Activated CD4-positive, alpha-beta T cell treated with anti-CD3 and anti-CD28 coated beads, Interleukin-2, amount 10 ng/mL, durations not matched to agents 24 days and 14 days (primary cell): ENCODE measurements at regions of chr5 and their contacts with region 1.

Region 1: DNA sequence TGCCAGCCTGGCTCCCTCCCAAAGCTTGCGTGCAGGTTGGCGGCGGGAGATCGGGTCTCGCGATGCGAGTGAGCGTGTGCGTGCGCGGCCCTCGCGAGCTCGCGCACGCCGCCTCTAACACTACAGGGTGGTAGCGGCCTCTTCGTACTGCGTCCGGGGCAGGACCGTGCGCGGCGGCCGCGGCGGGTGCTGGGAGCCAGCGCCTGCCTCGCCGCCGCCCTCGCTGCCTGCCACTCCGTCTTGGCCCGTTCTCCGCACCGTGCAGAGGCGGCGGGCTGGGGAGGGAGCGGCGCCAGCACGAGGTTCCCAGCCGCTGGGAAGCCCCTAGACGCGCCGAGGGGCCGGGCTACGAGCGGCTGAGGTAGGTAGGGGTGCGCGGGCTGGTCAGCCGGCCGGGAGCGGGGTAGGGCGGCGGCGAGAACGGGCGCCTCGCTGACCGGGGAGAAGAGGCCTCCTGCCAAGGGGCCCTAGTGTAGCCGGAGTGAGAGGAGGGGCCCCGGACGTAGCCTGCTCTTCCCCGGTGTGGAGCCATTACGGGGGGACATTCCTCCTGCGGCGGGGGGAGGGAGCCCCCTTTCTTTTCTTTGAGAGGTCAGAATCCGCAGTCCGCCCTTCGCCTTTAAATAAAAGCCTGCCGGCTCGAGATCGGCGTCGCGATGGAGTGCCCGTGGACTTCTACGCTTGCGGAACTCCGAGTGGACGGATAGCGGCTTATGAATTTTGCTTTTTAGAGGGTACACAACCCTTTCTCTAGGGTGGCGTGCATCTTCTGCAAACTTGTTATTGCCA is at the start of gene C5orf24:
- DNase-seq: peak; percentile 98
- H3K4me3 Mint-ChIP-seq: peak within 1 kb of the TSS; percentile 98
- H3K27ac Mint-ChIP-seq: peak within 1 kb of the TSS; percentile 97
- H3K4me1 Mint-ChIP-seq: peaks cover 21% of the 10 kb centered on the region
- H3K27me3 Mint-ChIP-seq: no peaks in the 10 kb centered on the region
- total RNA-seq, gene C5orf24: 38.7 and 43.9 TPM in 2 replicates

Region 2: DNA sequence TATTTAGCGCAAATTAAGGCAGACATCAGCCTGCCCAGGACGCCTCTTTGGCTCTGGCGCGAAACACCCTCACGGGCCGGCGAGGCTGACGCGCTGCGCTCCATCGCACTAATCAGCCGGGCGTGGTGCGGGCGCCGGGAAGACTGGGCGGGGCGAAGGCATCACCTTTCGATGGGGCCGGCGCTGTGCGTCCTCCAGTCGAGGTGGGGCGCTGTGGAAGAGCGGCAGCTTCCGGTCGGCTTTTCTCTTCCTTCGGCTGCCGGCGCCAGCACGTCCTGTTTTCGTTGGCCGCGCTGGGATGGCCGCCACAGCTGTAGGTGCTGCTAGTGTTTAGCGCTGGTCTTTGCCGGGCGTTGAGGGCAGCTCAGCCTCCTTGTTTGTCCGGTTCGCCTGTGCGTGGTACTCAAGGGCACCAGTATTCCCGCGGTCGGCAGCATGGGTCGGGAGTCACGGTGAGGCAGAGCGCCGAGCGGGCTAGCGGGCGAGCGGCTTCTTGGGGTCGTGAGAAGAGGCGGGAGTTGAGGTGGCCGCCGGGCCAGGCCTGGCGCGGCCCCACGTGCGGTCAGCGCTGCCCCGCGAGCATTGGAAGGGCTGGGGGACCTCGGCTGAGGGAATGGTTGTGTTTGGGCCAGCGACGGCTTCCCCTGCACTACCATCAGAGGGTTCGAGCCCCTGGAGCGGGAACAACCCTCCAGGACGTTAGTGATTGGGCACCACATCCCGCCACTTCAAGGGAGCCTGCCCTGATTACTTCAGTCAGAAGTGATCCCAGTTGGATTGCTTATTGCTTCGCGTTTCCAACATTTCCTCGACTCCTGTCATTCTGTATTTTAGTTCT is 87.3 kb before region 1 on chr5 and contains the start of gene DDX46:
- intact Hi-C with region 1: loop called (anchors 1 kb)
- DNase-seq: peak; percentile 99
- H3K4me3 Mint-ChIP-seq: peak within 1 kb of the TSS; percentile 99
- H3K27ac Mint-ChIP-seq: peak within 1 kb of the TSS; percentile 95
- H3K4me1 Mint-ChIP-seq: peaks cover 31% of the 10 kb centered on the region
- H3K27me3 Mint-ChIP-seq: no peaks in the 10 kb centered on the region
- total RNA-seq, gene DDX46: 83.8 and 89.4 TPM in 2 replicates

Region 3: DNA sequence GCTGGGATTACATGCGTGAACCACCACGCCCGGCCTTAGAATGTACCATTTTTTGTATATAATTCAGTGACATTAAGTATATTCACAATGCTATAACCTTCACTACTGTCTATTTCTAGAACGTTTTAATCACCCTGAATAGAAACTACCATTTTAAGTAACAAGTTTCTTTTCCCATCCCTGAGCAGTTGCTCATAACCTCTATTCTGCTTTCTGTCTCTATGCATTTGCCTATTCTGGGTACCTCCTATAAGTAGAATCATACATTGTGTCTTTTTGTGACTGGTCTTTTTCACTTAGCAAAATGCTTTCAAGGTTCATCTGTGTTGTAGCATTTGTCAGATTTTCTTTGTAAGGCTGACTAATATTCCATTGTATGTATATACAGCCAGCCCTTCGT is 47.6 kb before region 1 on chr5:
- intact Hi-C with region 1: no loop called
- DNase-seq: no peak
- H3K4me3 Mint-ChIP-seq: no peak overlapping the region
- H3K27ac Mint-ChIP-seq: peak overlapping the region; percentile 7
- H3K4me1 Mint-ChIP-seq: no peaks in the 10 kb centered on the region
- H3K27me3 Mint-ChIP-seq: no peaks in the 10 kb centered on the region

Region 4: GRCh38 chr5:134813407-134813806 is 32.6 kb before region 1 on chr5:
- intact Hi-C with region 1: loop called (anchors 5 kb)
- DNase-seq: peak; percentile 78
- H3K4me3 Mint-ChIP-seq: no peak overlapping the region
- H3K27ac Mint-ChIP-seq: peak overlapping the region; percentile 82
- H3K4me1 Mint-ChIP-seq: peaks cover 9% of the 10 kb centered on the region
- H3K27me3 Mint-ChIP-seq: no peaks in the 10 kb centered on the region

Region 5: GRCh38 chr5:134873987-134874830 is 28.2 kb after region 1 on chr5 and contains the start of gene TXNDC15:
- intact Hi-C with region 1: loop called (anchors 1 kb)
- DNase-seq: peak; percentile 95
- H3K4me3 Mint-ChIP-seq: peak within 1 kb of the TSS; percentile 99
- H3K27ac Mint-ChIP-seq: peak within 1 kb of the TSS; percentile 98
- H3K4me1 Mint-ChIP-seq: peaks cover 30% of the 10 kb centered on the region
- H3K27me3 Mint-ChIP-seq: no peaks in the 10 kb centered on the region
- total RNA-seq, gene TXNDC15: 46.2 and 51.3 TPM in 2 replicates